A673 (cell line): ENCODE measurements at regions of chr11 and their contacts with region 1.

Region 1: DNA sequence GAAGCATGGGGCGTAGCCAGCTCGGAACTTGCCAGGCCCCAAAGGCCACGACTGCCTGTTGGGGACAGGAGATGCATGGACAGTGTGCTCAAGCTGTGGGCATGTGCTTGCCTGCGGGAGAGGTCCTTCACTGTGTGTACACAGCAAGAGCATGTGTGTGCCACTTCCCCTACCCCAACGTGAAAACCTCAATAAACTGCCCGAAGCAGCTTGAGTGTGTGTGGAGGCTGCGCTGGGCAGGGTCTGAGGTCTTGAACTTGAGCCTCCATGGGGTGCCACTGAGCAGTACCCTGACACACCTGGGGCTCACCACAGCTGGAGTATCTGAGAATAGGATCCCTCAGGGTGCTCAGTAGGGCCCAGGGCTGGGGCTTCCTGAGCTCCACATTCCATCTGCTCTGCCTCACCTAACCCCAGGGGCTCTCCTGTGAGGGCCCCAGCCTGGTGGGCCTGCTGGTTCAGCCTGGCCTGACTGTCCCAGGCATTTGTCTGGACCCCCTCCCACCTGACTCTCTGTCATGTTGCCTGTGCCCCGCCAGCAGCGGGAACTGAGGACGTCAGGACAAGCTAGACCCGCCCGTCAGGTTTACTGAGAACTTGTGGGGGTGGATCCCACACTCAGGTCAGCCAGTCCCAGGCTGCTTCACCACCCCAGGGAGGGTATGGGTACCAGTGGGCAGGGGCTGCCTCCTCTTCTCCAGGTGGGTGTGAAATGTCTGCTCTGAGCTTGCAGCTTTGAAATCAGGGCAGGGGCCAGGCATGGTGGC is 3.2 kb downstream of the RASSF7 start:
- DNase-seq: no peak
- H3K4me3 ChIP-seq: no peak overlapping the region
- H3K27ac ChIP-seq: no peak overlapping the region
- H3K4me1 ChIP-seq: peaks cover 9% of the 10 kb centered on the region
- H3K27me3 ChIP-seq: no peaks in the 10 kb centered on the region
- CTCF ChIP-seq: no peak

Region 2: GRCh38 chr11:587978-588380 is 24.0 kb after region 1 on chr11:
- CTCF ChIA-PET with region 1: no interaction called
- POLR2A ChIA-PET with region 1: interaction called, 10 read pairs
- intact Hi-C with region 1: no loop called
- DNase-seq: no peak
- H3K4me3 ChIP-seq: no peak overlapping the region
- H3K27ac ChIP-seq: no peak overlapping the region
- H3K4me1 ChIP-seq: no peaks in the 10 kb centered on the region
- H3K27me3 ChIP-seq: no peaks in the 10 kb centered on the region
- CTCF ChIP-seq: no peak